ENCODE measurements at regions of chr1 and their contacts with region 1.

Region 1: DNA sequence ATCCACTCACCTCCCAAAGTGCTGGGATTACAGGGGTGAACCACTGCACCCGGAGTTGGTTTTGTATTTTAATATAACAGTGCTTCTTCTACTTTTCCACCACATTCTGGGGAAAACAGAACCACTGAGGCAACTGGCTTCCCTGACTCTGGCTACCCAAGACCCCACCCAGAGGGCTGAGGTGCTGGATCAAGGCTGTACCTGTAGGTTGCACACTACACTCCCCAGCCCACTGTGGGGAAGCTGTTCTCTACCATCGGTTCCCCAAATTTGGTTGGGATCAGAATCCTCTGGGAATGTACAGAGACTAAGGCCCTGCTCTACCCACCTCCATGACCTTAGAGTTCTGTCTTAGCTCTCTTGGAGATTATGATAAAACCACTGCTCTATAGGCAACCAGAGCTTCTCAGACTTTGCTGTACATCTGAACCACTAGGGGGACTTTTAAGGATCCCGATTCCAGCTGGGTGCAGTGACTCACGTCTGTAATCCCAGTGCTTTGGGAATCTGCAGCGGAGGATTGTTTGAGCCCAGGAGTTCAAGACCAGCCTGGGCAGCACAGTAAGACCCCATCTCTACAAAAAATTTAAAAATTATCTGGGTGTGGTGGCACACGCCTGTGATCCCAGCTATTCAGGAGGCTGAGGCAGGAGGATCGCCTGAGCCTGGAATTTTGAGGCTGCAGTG is 51.6 kb downstream of the GNG4 start:
- DNase-seq: no peak
- ATAC-seq: 0 out of 2 replicates have a peak, but pooled peaks have one; percentile 18
- H3K4me3 Mint-ChIP-seq: no peak overlapping the region
- H3K27ac Mint-ChIP-seq: no peak overlapping the region
- H3K4me1 Mint-ChIP-seq: peaks cover 8% of the 10 kb centered on the region; the same call in 1 of the 2 replicates
- H3K27me3 Mint-ChIP-seq: no peaks in the 10 kb centered on the region
- CTCF ChIP-seq: no peak

Region 2: GRCh38 chr1:235486321-235486720 is 111.7 kb before region 1 on chr1:
- CTCF ChIA-PET with region 1: no interaction called
- POLR2A ChIA-PET with region 1: no interaction called
- DNase-seq: no peak
- ATAC-seq: no peak
- H3K4me3 Mint-ChIP-seq: no peak overlapping the region
- H3K27ac Mint-ChIP-seq: no peak overlapping the region
- H3K4me1 Mint-ChIP-seq: no peaks in the 10 kb centered on the region
- H3K27me3 Mint-ChIP-seq: no peaks in the 10 kb centered on the region
- CTCF ChIP-seq: no peak

Region 3: DNA sequence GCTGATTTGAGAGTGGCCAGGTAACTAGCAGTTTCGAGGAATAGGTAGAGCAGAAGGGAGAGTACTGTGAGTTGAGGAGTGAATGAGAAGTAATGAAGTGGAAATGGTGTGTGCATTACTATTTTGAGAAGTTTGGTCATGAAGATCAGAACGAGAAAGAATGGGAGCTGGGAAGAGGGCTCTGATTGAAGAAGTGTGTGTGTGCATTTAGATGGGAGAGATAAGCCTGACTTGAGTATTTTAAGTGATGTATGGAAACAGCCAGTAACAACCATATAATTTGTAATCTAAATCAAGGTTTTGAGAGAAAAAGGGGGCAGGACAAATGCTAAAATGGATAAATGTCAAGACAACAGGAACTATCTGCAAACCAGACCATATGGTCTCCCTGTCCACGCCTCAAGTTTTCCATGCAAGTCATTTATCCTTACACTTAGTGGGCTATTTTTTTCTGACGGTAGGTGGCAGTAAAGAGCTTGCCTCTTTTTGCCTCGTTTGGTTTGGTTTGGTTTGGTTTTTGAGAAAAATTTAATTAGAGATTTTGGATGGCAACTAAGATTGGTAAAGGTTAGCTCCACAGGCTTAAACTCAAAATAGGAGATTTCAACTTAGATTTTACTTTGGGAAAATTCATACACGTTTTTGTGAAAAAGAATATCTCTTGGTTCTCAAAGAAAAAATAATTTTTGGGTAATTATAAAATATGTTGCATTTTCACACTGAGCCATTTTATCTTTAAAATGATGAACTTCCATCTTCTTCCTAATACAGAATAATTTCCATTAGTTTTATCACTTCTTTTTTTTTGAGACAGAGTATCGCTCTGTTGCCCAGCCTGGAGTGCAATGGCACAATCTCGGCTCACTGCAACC is 84.3 kb before region 1 on chr1:
- CTCF ChIA-PET with region 1: interaction called, 12 read pairs
- POLR2A ChIA-PET with region 1: no interaction called
- DNase-seq: no peak
- ATAC-seq: peak; percentile 46
- H3K4me3 Mint-ChIP-seq: no peak overlapping the region
- H3K27ac Mint-ChIP-seq: no peak overlapping the region
- H3K4me1 Mint-ChIP-seq: no peaks in the 10 kb centered on the region
- H3K27me3 Mint-ChIP-seq: no peaks in the 10 kb centered on the region
- CTCF ChIP-seq: peak; percentile 69

Region 4: GRCh38 chr1:235557495-235557894 is 40.5 kb before region 1 on chr1:
- CTCF ChIA-PET with region 1: interaction called, 36 read pairs
- POLR2A ChIA-PET with region 1: no interaction called
- DNase-seq: peak; percentile 67
- ATAC-seq: peak; percentile 80
- H3K4me3 Mint-ChIP-seq: no peak overlapping the region
- H3K27ac Mint-ChIP-seq: no peak overlapping the region
- H3K4me1 Mint-ChIP-seq: no peaks in the 10 kb centered on the region
- H3K27me3 Mint-ChIP-seq: no peaks in the 10 kb centered on the region; the same call in 1 of the 2 replicates
- CTCF ChIP-seq: peak; percentile 57

Region 5: DNA sequence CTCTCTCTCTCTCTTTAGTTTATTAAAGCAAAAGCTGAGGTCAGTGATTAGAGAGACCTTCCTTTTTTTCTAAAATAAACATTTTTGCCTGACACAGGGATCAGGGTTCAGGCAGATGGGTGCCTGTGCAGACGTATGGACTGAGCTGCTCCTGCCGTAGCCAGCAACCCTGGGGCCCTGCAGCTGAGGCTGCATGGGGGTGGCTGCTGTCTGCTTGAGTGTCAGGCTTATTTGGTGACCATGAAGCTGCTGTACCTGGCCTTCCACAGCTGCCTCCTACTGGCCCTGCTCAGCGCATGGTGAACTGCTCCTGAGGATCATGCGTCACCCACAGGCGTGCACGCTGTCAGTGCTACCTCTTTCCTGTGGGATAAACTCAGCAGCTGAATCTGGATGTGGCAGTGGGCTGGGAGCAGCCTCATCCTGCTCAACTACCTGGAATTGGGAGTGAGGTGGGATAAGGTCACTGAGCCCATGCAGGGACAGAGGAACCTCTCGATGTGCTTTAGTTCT is 16.5 kb after region 1 on chr1:
- CTCF ChIA-PET with region 1: interaction called, 41 read pairs
- POLR2A ChIA-PET with region 1: no interaction called
- DNase-seq: no peak
- ATAC-seq: peak; percentile 51
- H3K4me3 Mint-ChIP-seq: no peak overlapping the region
- H3K27ac Mint-ChIP-seq: no peak overlapping the region; the same call in 1 of the 2 replicates
- H3K4me1 Mint-ChIP-seq: peaks cover 6% of the 10 kb centered on the region
- H3K27me3 Mint-ChIP-seq: no peaks in the 10 kb centered on the region; the same call in 1 of the 2 replicates
- CTCF ChIP-seq: no peak

Region 6: GRCh38 chr1:235632506-235633401 is 34.7 kb after region 1 on chr1:
- CTCF ChIA-PET with region 1: interaction called, 12 read pairs
- POLR2A ChIA-PET with region 1: no interaction called
- DNase-seq: no peak
- ATAC-seq: no peak
- H3K4me3 Mint-ChIP-seq: no peak overlapping the region
- H3K27ac Mint-ChIP-seq: peak overlapping the region; percentile 31
- H3K4me1 Mint-ChIP-seq: peaks cover 54% of the 10 kb centered on the region
- H3K27me3 Mint-ChIP-seq: no peaks in the 10 kb centered on the region
- CTCF ChIP-seq: no peak